AG04450 (cell line): ENCODE measurements at regions of chr19 and their contacts with region 1.

Region 1: GRCh38 chr19:45049073-45049736 is 10.4 kb downstream of the CLASRP start:
- DNase-seq: no peak
- H3K4me3 ChIP-seq: no peak overlapping the region
- H3K27ac ChIP-seq: no peak overlapping the region
- H3K27me3 ChIP-seq: no peaks in the 10 kb centered on the region
- CTCF ChIP-seq: no peak

Region 2: DNA sequence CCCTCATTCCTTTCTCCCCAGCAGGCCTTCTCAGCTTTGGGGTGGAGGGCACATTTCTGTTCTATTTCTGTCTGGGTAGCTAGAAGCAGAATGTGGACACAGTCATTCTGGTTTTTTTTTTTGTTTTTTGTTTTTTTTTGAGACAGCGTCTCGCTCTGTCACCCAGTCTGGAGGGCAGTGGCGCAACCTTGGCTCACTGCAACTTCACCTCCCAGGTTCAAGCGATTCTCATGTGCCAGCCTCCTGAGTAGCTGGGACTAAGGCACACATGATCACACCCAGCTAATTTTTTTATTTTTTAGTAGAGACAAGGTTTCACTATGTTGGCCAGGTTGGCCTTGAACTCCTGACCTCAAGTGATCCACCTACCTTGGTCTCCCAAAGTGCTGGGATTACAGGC is 73.8 kb before region 1 on chr19:
- CTCF ChIA-PET with region 1: no interaction called
- POLR2A ChIA-PET with region 1: no interaction called
- DNase-seq: no peak
- H3K4me3 ChIP-seq: no peak overlapping the region
- H3K27ac ChIP-seq: no peak overlapping the region
- H3K27me3 ChIP-seq: no peaks in the 10 kb centered on the region
- CTCF ChIP-seq: no peak

Region 3: DNA sequence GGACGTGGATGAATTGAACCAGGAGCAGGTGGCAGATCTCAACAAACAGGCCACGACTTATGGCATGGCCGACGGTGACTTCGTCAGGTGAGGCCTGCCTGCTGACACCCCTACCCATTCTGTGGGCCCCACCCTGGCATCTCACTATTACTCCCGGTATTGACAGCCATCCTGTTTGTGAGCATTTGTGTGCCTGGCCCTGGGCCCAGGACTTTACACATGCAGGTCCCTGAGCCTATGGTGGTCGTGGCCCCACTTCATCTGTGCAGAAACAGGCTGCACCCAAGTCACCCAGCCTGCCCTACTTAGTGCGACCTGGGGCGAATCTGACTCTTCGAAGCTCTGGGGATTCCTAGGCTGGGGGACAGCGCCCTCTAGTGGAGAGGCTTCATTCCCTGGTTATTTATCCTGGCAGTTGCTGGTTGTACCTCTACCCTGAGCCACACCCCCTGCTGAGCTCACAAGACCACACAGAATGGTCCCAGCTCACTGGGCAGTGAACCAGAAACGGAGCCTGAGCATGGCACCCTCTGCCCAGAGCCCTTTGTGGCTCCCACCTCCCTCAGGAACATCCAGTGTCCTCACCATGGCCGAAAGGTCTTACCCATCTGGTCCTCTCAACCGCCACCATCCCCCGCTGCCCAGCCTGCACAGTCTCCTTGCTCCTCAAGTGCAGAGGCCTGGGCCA is 10.2 kb after region 1 on chr19:
- CTCF ChIA-PET with region 1: interaction called, 27 read pairs
- POLR2A ChIA-PET with region 1: interaction called, 3 read pairs
- DNase-seq: peak; percentile 15
- H3K4me3 ChIP-seq: no peak overlapping the region
- H3K27ac ChIP-seq: peak overlapping the region; percentile 11
- H3K27me3 ChIP-seq: no peaks in the 10 kb centered on the region
- CTCF ChIP-seq: peak; percentile 86